IMR-90 (cell line): ENCODE measurements at regions of chr1 and their contacts with region 1.

Region 1: GRCh38 chr1:58816072-58816746 is 32.4 kb upstream of the JUN start:
- DNase-seq: peak; percentile 89
- ATAC-seq: peak; percentile 69
- H3K4me3 ChIP-seq: peak overlapping the region; percentile 49
- H3K27ac ChIP-seq: peak overlapping the region; percentile 97
- H3K4me1 ChIP-seq: peaks cover 16% of the 10 kb centered on the region
- H3K27me3 ChIP-seq: no peaks in the 10 kb centered on the region
- CTCF ChIP-seq: 0 out of 2 replicates have a peak, but pooled peaks have one; percentile 10
- POLR2A ChIP-seq: no peak
- RAD21 ChIP-seq: no peak; the same call in 1 of the 2 replicates

Region 2: GRCh38 chr1:58395355-58395754 is 420.9 kb before region 1 on chr1:
- CTCF ChIA-PET with region 1: no interaction called
- POLR2A ChIA-PET with region 1: no interaction called
- dilution Hi-C with region 1: no loop called
- in situ Hi-C with region 1: no loop called
- intact Hi-C with region 1: no loop called
- DNase-seq: peak; percentile 91
- ATAC-seq: peak; percentile 91
- H3K4me3 ChIP-seq: no peak overlapping the region
- H3K27ac ChIP-seq: peak overlapping the region; percentile 56
- H3K4me1 ChIP-seq: peaks cover 11% of the 10 kb centered on the region
- H3K27me3 ChIP-seq: no peaks in the 10 kb centered on the region
- CTCF ChIP-seq: no peak
- POLR2A ChIP-seq: no peak
- RAD21 ChIP-seq: no peak

Region 3: DNA sequence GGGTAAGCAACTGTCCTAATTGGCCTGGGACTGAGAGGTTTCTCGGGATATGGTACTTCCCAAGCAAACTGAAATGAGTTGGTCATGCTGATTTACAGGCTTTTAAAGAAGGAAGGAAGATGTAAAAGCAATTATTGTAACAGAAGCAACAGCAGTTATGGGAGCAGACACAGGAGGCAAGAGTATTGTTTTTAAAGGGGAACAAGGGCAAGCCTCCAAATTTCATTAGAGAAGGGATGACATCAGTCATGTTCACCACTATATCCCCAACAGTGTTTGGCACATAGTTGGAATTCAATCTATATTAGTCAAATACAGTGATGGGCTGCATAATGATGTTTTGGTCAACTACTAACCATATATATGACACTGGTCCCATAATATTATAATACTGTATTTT is 13.7 kb after region 1 on chr1:
- CTCF ChIA-PET with region 1: no interaction called
- POLR2A ChIA-PET with region 1: no interaction called
- dilution Hi-C with region 1: no loop called
- in situ Hi-C with region 1: no loop called
- intact Hi-C with region 1: loop called (anchors 1 kb)
- DNase-seq: no peak
- ATAC-seq: peak; percentile 24; the same call in 1 of the 2 replicates
- H3K4me3 ChIP-seq: no peak overlapping the region
- H3K27ac ChIP-seq: no peak overlapping the region
- H3K4me1 ChIP-seq: no peaks in the 10 kb centered on the region; the same call in 1 of the 2 replicates
- H3K27me3 ChIP-seq: no peaks in the 10 kb centered on the region
- CTCF ChIP-seq: no peak
- POLR2A ChIP-seq: no peak
- RAD21 ChIP-seq: no peak

Region 4: GRCh38 chr1:58932859-58933598 is 116.8 kb after region 1 on chr1:
- CTCF ChIA-PET with region 1: no interaction called
- POLR2A ChIA-PET with region 1: no interaction called
- dilution Hi-C with region 1: no loop called
- in situ Hi-C with region 1: no loop called
- intact Hi-C with region 1: no loop called
- DNase-seq: peak; percentile 76
- ATAC-seq: peak; percentile 96
- H3K4me3 ChIP-seq: no peak overlapping the region
- H3K27ac ChIP-seq: peak overlapping the region; percentile 56
- H3K4me1 ChIP-seq: peaks cover 6% of the 10 kb centered on the region
- H3K27me3 ChIP-seq: no peaks in the 10 kb centered on the region
- CTCF ChIP-seq: no peak
- POLR2A ChIP-seq: no peak
- RAD21 ChIP-seq: no peak; the same call in 1 of the 2 replicates

Region 5: GRCh38 chr1:59013276-59013927 is 197.2 kb after region 1 on chr1:
- CTCF ChIA-PET with region 1: no interaction called
- POLR2A ChIA-PET with region 1: interaction called, 14 read pairs
- dilution Hi-C with region 1: no loop called
- in situ Hi-C with region 1: no loop called
- intact Hi-C with region 1: no loop called
- DNase-seq: peak; percentile 36
- ATAC-seq: peak; percentile 49
- H3K4me3 ChIP-seq: peak overlapping the region; percentile 6; the same call in 1 of the 2 replicates
- H3K27ac ChIP-seq: peak overlapping the region; percentile 63
- H3K4me1 ChIP-seq: peaks cover 20% of the 10 kb centered on the region
- H3K27me3 ChIP-seq: no peaks in the 10 kb centered on the region
- CTCF ChIP-seq: no peak
- POLR2A ChIP-seq: no peak
- RAD21 ChIP-seq: no peak

Region 6: DNA sequence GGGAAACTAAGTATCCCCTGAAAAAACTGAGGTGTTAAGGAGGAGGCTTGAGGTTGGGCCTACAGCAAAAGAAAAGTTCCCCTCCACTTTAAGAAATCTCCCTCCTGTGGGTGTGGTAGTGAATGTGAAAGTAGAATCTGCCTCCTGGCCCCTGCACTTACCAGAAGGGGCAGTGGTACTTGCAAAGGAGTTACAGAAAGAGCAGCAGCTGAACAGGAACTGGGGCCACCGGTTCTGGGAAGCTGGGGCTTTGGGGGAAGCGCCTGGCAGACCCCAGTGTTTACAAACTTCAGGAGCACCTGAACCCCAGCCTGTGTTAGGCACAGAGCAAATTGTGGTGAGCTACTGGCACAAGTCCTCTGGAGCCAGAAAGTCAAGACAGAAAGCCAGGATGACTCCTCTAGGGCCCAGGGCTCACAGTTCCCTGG is 230.5 kb after region 1 on chr1:
- CTCF ChIA-PET with region 1: no interaction called
- POLR2A ChIA-PET with region 1: no interaction called
- dilution Hi-C with region 1: no loop called
- in situ Hi-C with region 1: no loop called
- intact Hi-C with region 1: no loop called
- DNase-seq: peak; percentile 25
- ATAC-seq: peak; percentile 22; the same call in 1 of the 2 replicates
- H3K4me3 ChIP-seq: no peak overlapping the region
- H3K27ac ChIP-seq: no peak overlapping the region
- H3K4me1 ChIP-seq: peaks cover 14% of the 10 kb centered on the region
- H3K27me3 ChIP-seq: no peaks in the 10 kb centered on the region
- CTCF ChIP-seq: no peak
- POLR2A ChIP-seq: no peak
- RAD21 ChIP-seq: no peak